MCF 10A (cell line): ENCODE measurements at regions of chr1 and their contacts with region 1.

Region 1: DNA sequence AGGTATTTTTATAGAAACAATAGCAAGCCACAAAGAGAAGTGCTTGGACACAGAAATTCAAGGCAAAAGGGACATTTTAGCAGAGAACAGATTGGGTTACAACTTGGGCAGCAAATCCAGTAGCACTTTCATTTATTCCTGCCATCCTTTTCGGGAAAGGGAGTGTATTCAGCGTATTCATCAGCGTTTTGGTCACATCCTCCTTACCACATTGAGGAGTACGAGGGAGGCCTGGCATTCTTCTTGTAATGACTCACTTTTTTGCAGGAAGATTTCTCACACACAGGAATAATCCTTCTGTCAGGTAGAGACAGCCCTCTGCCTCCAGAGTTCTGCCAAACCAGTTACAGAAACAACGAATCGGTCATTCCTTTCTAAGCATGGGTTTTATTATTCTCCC is 18.1 kb upstream of the FAM78B start:
- DNase-seq: peak; percentile 82
- H3K4me3 Mint-ChIP-seq: no peak overlapping the region
- H3K27ac Mint-ChIP-seq: no peak overlapping the region
- H3K4me1 Mint-ChIP-seq: peaks cover 15% of the 10 kb centered on the region
- H3K27me3 Mint-ChIP-seq: no peaks in the 10 kb centered on the region
- CTCF ChIP-seq: no peak

Region 2: GRCh38 chr1:165936542-165936941 is 248.4 kb before region 1 on chr1:
- CTCF ChIA-PET with region 1: no interaction called
- POLR2A ChIA-PET with region 1: no interaction called
- intact Hi-C with region 1: no loop called
- DNase-seq: peak; percentile 17
- H3K4me3 Mint-ChIP-seq: no peak overlapping the region
- H3K27ac Mint-ChIP-seq: no peak overlapping the region
- H3K4me1 Mint-ChIP-seq: no peaks in the 10 kb centered on the region
- H3K27me3 Mint-ChIP-seq: peaks cover 10% of the 10 kb centered on the region
- CTCF ChIP-seq: no peak

Region 3: DNA sequence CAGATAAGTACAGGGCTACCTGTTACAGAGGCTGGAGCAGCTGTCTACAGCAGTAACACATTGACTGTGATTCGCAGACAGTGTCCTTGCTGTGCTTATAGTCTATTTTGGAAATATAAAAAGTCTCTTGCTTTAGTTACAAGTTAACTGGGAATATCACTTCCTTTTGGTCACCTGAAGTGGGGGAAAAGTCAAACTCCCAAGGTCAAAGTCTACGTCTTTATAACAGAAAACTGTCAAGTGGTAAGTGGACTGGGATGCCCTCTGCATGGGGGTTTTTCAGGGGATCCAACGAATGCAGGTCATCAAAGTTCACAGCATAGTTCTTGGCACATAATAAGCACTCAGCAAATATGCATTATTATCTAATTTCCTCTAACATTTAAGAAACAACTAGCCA is 73.5 kb before region 1 on chr1:
- CTCF ChIA-PET with region 1: no interaction called
- POLR2A ChIA-PET with region 1: no interaction called
- intact Hi-C with region 1: no loop called
- DNase-seq: no peak
- H3K4me3 Mint-ChIP-seq: no peak overlapping the region
- H3K27ac Mint-ChIP-seq: no peak overlapping the region
- H3K4me1 Mint-ChIP-seq: no peaks in the 10 kb centered on the region
- H3K27me3 Mint-ChIP-seq: no peaks in the 10 kb centered on the region
- CTCF ChIP-seq: no peak

Region 4: GRCh38 chr1:166133276-166133841 is 51.5 kb before region 1 on chr1:
- CTCF ChIA-PET with region 1: interaction called, 7 read pairs
- POLR2A ChIA-PET with region 1: no interaction called
- intact Hi-C with region 1: loop called (anchors 1 kb)
- DNase-seq: peak; percentile 68
- H3K4me3 Mint-ChIP-seq: no peak overlapping the region
- H3K27ac Mint-ChIP-seq: no peak overlapping the region
- H3K4me1 Mint-ChIP-seq: no peaks in the 10 kb centered on the region
- H3K27me3 Mint-ChIP-seq: peaks cover 17% of the 10 kb centered on the region
- CTCF ChIP-seq: peak; percentile 83

Region 5: GRCh38 chr1:166166695-166167571 is 18.0 kb before region 1 on chr1 and contains the start of gene FAM78B:
- CTCF ChIA-PET with region 1: interaction called, 13 read pairs
- POLR2A ChIA-PET with region 1: interaction called, 3 read pairs
- intact Hi-C with region 1: loop called (anchors 2 kb)
- DNase-seq: peak; percentile 85
- H3K4me3 Mint-ChIP-seq: peak within 1 kb of the TSS; percentile 72
- H3K27ac Mint-ChIP-seq: no peak within 1 kb of the TSS
- H3K4me1 Mint-ChIP-seq: peaks cover 17% of the 10 kb centered on the region
- H3K27me3 Mint-ChIP-seq: peaks cover 26% of the 10 kb centered on the region
- CTCF ChIP-seq: no peak
- total RNA-seq, gene FAM78B: 1.1 and 1.5 TPM in 2 replicates

Region 6: DNA sequence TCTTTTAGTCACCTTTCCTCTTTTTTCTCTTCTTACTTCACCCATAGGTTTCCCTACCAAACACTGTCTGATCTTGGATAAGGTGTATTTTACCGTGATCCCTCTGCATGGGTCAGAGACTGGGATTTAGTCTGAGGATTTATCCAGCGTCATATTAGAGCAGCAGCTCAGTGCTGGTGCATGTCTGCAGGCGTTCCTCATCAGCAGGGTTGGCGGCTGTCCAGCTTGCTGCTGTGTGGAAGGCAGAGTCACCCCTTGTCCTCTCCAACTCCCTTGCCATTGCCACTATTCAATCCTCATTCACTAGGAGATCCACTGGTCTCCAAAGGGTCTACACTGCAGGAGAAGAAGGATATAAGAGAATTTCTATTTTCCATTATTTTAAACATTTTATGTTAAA is 10.8 kb before region 1 on chr1:
- CTCF ChIA-PET with region 1: interaction called, 13 read pairs
- POLR2A ChIA-PET with region 1: no interaction called
- intact Hi-C with region 1: no loop called
- DNase-seq: peak; percentile 70
- H3K4me3 Mint-ChIP-seq: no peak overlapping the region
- H3K27ac Mint-ChIP-seq: no peak overlapping the region
- H3K4me1 Mint-ChIP-seq: no peaks in the 10 kb centered on the region
- H3K27me3 Mint-ChIP-seq: no peaks in the 10 kb centered on the region
- CTCF ChIP-seq: no peak

Region 7: GRCh38 chr1:166221316-166221715 is 36.4 kb after region 1 on chr1:
- CTCF ChIA-PET with region 1: no interaction called
- POLR2A ChIA-PET with region 1: no interaction called
- intact Hi-C with region 1: no loop called
- DNase-seq: no peak
- H3K4me3 Mint-ChIP-seq: no peak overlapping the region
- H3K27ac Mint-ChIP-seq: no peak overlapping the region
- H3K4me1 Mint-ChIP-seq: no peaks in the 10 kb centered on the region
- H3K27me3 Mint-ChIP-seq: no peaks in the 10 kb centered on the region
- CTCF ChIP-seq: no peak

Region 8: DNA sequence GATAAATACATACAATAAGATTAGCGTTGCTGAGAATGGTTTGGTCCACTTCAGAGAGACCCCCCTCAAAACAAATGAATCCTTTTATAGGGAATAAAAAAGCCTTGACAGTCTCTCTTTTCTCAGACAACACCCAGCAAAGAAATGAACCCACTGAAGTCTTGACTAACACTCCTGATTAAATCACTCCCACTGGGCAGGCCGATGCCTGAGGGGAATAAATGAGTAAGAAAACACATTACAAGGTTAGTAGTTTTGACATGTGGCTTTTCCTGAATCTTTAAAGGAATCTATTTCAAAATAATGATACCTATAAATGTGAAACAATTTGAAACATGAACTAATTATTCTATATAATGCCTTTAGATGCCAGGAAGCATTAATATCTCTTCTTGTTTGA is 507.4 kb after region 1 on chr1:
- CTCF ChIA-PET with region 1: no interaction called
- POLR2A ChIA-PET with region 1: no interaction called
- intact Hi-C with region 1: no loop called
- DNase-seq: peak; percentile 60
- H3K4me3 Mint-ChIP-seq: no peak overlapping the region
- H3K27ac Mint-ChIP-seq: peak overlapping the region; percentile 25
- H3K4me1 Mint-ChIP-seq: peaks cover 17% of the 10 kb centered on the region
- H3K27me3 Mint-ChIP-seq: no peaks in the 10 kb centered on the region
- CTCF ChIP-seq: no peak